ENCODE measurements at regions of chr1 and their contacts with region 1.

Region 1: DNA sequence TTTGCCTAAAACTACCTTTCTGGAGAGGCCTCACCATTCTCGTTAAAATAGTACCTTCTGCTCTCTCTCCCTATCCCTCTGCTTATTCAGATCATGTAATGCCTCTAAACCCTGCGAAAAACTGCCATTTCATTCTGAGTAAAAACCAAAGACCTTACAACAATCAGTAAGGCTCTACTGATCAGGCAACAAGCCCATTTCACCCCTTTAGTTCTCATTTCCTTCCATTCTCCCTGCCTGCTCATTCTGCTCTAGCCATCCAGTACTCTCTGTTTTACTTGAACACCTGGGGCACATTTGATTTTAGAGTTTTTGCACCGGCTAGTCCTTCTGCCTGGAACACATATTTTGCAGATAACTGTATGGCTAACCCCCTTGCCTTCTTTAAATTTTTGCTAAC is 187.8 kb downstream of the COQ8A start:
- DNase-seq: no peak
- ATAC-seq: no peak
- H3K4me3 ChIP-seq: no peak overlapping the region
- H3K4me3 Mint-ChIP-seq: no peak overlapping the region
- H3K27ac ChIP-seq: no peak overlapping the region
- H3K27ac Mint-ChIP-seq: no peak overlapping the region
- H3K4me1 ChIP-seq: no peaks in the 10 kb centered on the region
- H3K4me1 Mint-ChIP-seq: no peaks in the 10 kb centered on the region
- H3K27me3 ChIP-seq: no peaks in the 10 kb centered on the region
- H3K27me3 Mint-ChIP-seq: peaks cover 0 to 6% (median 2%) of the 10 kb centered on the region in 5 donors

Region 2: GRCh38 chr1:226912587-226913176 is 215.2 kb before region 1 on chr1:
- CTCF ChIA-PET with region 1: no interaction called
- POLR2A ChIA-PET with region 1: no interaction called
- intact Hi-C with region 1: loop called in 1 of 2 experiments (anchors 2 kb)
- DNase-seq: peak in 7 of 9 donors; percentile 16 to 43 (median 29)
- ATAC-seq: peak; percentile 67
- H3K4me3 ChIP-seq: no peak overlapping the region
- H3K4me3 Mint-ChIP-seq: peak overlapping the region in 1 of 10 donors; percentile 10
- H3K27ac ChIP-seq: no peak overlapping the region
- H3K27ac Mint-ChIP-seq: peak overlapping the region in 2 of 9 donors; percentile 28 to 64
- H3K4me1 ChIP-seq: no peaks in the 10 kb centered on the region
- H3K4me1 Mint-ChIP-seq: peaks cover 0 to 18% (median 0%) of the 10 kb centered on the region in 7 donors
- H3K27me3 ChIP-seq: no peaks in the 10 kb centered on the region
- H3K27me3 Mint-ChIP-seq: no peaks in the 10 kb centered on the region

Measured in naive thymus-derived CD4-positive, alpha-beta T cell (primary cell).